ENCODE measurements at regions of chr1 and their contacts with region 1.

Region 1: DNA sequence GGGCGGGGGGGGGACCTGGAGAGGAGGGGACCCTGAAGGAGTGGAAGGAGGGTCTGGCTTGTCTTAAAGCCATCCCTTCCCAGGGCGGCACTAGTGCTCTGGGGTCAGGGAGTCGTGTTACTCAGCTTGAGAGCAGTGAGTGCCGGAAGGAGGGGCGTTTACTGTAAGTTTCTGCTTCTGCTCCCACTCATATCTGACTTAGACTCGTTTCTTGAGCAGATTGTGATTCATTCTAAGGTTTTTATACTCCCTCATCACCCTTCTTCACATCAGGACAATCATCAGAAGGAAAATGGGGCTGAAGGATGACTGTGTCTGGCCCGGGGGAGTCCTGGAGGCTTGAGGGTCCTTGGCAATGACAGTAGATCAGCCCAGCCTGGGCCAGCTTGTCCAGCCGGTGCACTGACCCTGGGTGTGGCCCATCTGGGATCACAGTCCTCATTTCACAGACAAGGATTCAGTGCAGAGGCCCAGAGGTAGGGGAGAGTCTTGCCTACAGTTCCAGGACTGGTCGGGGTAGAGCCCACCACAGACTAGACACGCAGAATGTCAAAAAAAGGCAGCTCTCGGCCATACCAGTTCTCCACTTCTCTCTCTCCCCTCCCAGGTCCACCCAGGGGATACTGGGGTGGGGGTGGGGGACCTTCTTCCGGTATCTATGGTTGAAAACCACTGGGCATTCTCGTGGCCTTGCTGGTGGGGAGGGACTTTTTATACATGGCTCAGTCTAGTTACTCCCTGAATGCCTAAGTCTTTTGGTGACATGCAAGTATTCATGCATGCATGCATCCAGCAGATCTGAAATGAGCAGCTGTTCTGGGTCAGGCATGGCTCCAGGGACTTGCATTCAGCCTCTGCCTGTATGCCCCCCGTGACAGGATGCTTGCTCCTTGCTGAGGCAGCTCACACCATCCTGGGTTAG is 5.1 kb downstream of the TNFRSF8 start:
- DNase-seq: peak; percentile 24
- H3K4me3 ChIP-seq: no peak overlapping the region
- H3K27ac ChIP-seq: peak overlapping the region; percentile 70
- H3K27me3 ChIP-seq: peaks cover 28% of the 10 kb centered on the region
- CTCF ChIP-seq: no peak

Region 2: DNA sequence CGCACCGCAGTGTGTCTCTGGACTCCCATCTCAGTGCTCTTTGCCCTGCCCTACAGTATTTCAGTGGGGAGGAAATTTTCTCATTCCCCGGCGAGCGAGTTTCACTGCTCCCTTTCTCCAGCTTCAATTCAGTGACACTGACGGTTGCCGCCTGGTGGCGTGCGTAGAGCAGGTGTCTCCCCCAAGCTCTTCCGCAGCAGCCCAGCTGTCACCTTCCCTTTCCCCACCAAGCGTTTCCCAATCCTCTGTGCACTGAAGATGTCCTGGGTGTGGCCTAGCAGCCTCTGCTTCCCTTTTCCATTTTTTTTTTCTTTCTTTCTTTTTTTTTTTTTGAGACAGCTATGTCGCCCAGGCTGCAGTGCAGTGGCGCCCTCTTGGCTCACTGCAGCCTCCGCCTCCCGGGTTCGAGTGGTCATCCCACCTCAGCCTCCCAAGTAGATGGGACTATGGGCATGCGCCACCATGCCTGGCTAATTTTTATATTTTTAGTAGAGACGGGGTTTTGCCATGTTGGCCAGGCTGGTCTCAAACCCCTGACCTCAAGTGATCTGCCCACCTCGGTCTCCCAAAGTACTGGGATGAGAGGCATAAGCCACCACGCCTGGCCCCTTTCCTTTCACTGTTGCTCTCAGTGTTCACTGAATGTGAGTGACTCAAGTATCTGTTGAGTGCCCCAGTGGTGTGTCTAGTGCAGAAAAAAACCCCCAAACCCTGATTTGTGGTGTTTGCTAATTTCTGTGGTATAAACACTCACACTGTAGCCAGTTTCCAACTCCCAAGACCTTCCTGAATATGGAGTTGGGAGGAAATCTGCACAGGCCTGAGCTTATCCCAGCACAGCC is 128.7 kb after region 1 on chr1:
- CTCF ChIA-PET with region 1: interaction called, 10 read pairs
- POLR2A ChIA-PET with region 1: no interaction called
- DNase-seq: no peak
- H3K4me3 ChIP-seq: no peak overlapping the region
- H3K27ac ChIP-seq: no peak overlapping the region
- H3K27me3 ChIP-seq: no peaks in the 10 kb centered on the region
- CTCF ChIP-seq: 0 out of 2 replicates have a peak, but pooled peaks have one; percentile 7

Region 3: DNA sequence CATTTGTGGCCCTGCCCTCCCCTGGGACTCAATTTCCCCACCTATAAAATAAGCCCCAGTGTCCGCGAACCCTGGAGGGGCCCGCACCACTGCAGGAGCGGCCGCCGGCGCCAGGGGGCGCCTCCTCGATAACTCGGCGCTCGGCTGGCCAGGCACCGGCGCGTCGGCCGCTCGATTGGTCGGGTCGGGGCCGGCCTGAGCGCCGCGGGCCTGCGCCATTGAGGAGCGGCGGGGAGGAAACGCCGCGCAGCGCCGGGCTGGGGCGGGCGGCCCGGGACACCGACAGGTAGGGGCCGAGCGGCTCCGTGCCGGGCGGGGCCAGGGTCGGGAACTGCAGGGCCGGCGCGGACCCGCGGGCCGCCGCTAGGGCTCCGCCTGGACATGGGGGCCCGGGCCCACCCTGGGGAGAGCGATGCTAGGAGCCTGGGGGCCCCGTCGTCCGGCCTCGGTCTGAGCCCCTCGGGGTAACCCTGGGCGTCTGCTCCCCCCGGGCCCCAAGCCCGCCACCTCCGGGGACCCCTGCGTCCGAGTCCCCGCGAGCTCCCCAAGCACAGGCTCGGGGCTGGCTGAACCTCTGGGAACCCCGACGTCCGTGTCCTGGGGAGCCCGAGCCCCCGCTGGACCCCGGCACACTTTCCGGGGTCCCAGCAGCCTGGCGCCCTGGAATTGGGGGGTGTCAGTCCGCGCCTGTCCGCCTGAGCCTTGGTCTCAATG is 161.8 kb after region 1 on chr1 and contains the start of gene VPS13D:
- CTCF ChIA-PET with region 1: no interaction called
- POLR2A ChIA-PET with region 1: no interaction called
- DNase-seq: peak; percentile 21
- H3K4me3 ChIP-seq: peak within 1 kb of the TSS; percentile 91
- H3K27ac ChIP-seq: no peak within 1 kb of the TSS
- H3K27me3 ChIP-seq: peaks cover 6% of the 10 kb centered on the region
- CTCF ChIP-seq: peak; percentile 86
- polyA plus RNA-seq, gene VPS13D: 18.3 and 19.0 TPM in 2 replicates